ENCODE measurements at regions of chr17 and their contacts with region 1.

Region 1: DNA sequence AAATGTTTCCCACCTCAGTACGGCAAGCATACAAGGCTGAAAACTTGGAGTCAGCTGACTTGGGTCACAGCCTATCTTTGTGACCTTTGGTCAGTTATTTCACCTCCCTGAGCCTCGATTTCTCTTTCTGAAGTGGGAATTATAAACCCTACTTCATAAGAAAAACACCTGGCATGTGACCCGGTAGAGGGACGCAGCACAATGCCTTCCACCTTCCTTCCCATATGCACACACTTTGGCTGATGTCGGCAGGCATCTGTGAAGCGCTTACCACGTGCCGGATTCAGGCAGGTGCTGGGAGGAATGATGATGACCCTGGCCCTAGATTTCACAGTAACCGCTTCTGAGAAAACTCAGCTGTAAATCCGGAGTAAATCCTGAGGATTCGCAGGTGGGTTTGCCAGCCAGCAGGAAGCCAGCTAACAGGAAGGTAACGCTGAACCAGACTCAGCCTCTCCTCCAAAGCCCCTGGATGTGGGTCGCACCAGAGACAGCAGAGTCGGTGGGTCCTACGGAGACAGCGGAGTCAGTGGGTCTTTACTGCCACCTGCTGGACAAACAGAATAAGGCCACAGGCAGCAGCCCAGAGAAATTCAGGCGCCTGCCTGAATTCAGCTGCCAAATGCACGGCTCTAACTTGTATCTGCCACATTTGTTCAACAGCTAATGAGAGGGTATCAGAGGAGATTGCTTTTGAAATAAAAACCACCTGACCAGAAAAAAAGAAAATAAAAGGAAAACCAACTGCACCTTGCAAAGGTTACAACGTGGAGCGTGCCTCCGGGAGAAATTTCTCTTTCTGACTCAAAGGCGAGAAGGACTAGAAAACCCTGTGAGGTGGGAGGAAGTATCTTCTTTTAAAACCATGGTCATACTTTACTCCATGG is 16.6 kb downstream of the COPRS start:
- DNase-seq: peak; percentile 69 to 74
- H3K4me3 ChIP-seq: peak overlapping the region in 1 of 3 donors; percentile 8
- H3K27ac ChIP-seq: peak overlapping the region; percentile 16 to 78 (median 72)
- H3K4me1 ChIP-seq: peaks cover 11 to 22% of the 10 kb centered on the region in 2 donors
- H3K27me3 ChIP-seq: no peaks in the 10 kb centered on the region
- CTCF ChIP-seq: peak; percentile 87 to 98 (median 96)
- POLR2A ChIP-seq: no peak

Region 2: GRCh38 chr17:31437720-31438420 is 404.6 kb before region 1 on chr17:
- intact Hi-C with region 1: loop called (anchors 5 kb)
- DNase-seq: no peak
- H3K4me3 ChIP-seq: no peak overlapping the region
- H3K27ac ChIP-seq: no peak overlapping the region
- H3K4me1 ChIP-seq: peaks cover 0 to 3% of the 10 kb centered on the region in 2 donors
- H3K27me3 ChIP-seq: no peaks in the 10 kb centered on the region
- CTCF ChIP-seq: no peak
- POLR2A ChIP-seq: no peak

Region 3: GRCh38 chr17:31558748-31559644 is 283.4 kb before region 1 on chr17:
- intact Hi-C with region 1: loop called (anchors 2 kb)
- DNase-seq: peak; percentile 75 to 78
- H3K4me3 ChIP-seq: peak overlapping the region; percentile 38 to 66 (median 56)
- H3K27ac ChIP-seq: peak overlapping the region; percentile 44 to 83 (median 69)
- H3K4me1 ChIP-seq: peaks cover 16 to 34% of the 10 kb centered on the region in 2 donors
- H3K27me3 ChIP-seq: no peaks in the 10 kb centered on the region
- CTCF ChIP-seq: peak; percentile 12 to 94 (median 84)
- POLR2A ChIP-seq: peak; percentile 56 to 69

Region 4: DNA sequence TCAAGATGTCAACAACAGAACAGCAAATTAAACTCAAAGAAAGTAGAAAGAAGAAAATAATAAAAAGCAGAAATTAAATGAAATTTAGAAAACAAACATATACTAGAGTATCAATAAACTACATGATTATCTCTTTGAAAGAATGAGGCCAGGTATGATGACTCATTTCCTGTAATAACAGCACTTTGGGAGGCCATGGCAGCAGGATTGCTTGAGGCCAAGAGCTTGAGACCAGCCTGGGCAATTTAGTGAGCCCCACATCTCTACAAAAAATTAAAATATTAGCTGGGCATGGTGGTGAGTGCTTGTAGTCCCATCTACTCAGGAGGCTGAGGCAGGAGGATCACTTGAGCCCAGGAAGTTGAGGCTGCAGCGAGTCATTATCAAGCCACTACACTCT is 218.4 kb before region 1 on chr17:
- intact Hi-C with region 1: no loop called
- DNase-seq: no peak
- H3K4me3 ChIP-seq: no peak overlapping the region
- H3K27ac ChIP-seq: no peak overlapping the region
- H3K4me1 ChIP-seq: peaks cover 6 to 13% of the 10 kb centered on the region in 2 donors
- H3K27me3 ChIP-seq: no peaks in the 10 kb centered on the region
- CTCF ChIP-seq: no peak
- POLR2A ChIP-seq: no peak

Region 5: GRCh38 chr17:31754239-31754945 is 88.0 kb before region 1 on chr17:
- intact Hi-C with region 1: no loop called
- DNase-seq: no peak
- H3K4me3 ChIP-seq: no peak overlapping the region
- H3K27ac ChIP-seq: no peak overlapping the region
- H3K4me1 ChIP-seq: no peaks in the 10 kb centered on the region
- H3K27me3 ChIP-seq: no peaks in the 10 kb centered on the region
- CTCF ChIP-seq: no peak
- POLR2A ChIP-seq: no peak

Region 6: DNA sequence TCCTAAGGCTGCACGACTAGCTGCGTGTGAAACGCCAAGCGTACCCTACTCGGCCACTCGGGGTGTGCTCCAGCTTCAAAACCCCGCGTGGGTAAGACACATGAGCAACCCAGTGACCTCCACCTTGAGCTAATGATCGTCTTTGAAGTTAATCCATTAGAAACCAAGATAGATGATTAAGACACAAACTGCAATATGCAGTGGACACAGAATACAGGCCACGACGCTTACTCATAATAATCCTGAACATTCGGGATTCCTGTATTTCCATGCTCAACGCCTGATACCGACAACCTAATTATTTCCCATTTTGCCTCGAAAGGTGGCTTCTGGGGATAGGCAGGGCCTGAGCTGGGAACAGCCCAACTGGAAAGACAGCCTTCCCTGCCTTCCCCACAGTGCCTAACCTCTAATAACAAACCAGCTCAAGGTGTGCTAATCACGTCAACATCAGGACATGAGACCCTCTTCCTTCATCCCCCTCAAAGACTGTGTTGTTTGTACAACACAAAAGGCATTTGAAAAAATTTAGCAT is 17.1 kb after region 1 on chr17:
- intact Hi-C with region 1: no loop called
- DNase-seq: no peak
- H3K4me3 ChIP-seq: no peak overlapping the region
- H3K27ac ChIP-seq: no peak overlapping the region
- H3K4me1 ChIP-seq: peaks cover 12 to 16% of the 10 kb centered on the region in 2 donors
- H3K27me3 ChIP-seq: no peaks in the 10 kb centered on the region
- CTCF ChIP-seq: no peak
- POLR2A ChIP-seq: no peak

Region 7: DNA sequence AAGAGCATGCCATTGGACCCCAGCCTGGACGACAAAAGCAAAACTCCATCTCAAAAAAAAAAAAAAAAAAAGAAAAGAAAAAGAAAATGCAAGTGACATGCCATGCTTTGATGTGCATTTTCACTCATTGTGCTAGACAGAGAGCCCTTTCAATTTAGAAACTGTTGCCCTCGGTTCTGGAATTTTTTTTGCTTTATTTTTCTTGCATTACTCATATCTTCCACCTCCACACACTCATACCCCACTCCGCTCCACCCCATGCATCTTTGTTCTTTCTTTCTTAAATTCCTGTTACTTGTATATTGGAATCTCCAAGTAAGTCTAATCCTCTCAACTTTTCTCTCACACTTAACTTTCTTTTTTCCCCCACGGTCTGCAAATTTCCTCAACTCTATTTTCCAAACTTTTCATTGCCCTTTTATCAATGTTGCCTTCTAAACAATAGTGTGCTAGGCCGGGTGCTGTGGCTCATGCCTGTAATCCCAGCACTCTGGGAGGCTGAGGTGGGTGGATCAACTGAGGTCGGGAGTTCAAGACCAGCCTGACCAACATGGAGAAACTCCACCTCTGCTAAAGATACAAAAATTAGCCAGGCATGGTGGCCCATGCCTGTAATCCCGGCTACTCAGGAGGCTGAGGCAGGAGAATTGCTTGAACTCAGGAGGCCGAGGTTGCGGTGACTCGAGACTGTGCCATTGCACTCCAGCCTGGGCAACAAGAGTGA is 77.5 kb after region 1 on chr17:
- intact Hi-C with region 1: no loop called
- DNase-seq: no peak
- H3K4me3 ChIP-seq: no peak overlapping the region
- H3K27ac ChIP-seq: no peak overlapping the region
- H3K4me1 ChIP-seq: peaks cover 0 to 8% of the 10 kb centered on the region in 2 donors
- H3K27me3 ChIP-seq: no peaks in the 10 kb centered on the region
- CTCF ChIP-seq: no peak
- POLR2A ChIP-seq: no peak